GM12878 (cell line): ENCODE measurements at regions of chr14 and their contacts with region 1.

Region 1: DNA sequence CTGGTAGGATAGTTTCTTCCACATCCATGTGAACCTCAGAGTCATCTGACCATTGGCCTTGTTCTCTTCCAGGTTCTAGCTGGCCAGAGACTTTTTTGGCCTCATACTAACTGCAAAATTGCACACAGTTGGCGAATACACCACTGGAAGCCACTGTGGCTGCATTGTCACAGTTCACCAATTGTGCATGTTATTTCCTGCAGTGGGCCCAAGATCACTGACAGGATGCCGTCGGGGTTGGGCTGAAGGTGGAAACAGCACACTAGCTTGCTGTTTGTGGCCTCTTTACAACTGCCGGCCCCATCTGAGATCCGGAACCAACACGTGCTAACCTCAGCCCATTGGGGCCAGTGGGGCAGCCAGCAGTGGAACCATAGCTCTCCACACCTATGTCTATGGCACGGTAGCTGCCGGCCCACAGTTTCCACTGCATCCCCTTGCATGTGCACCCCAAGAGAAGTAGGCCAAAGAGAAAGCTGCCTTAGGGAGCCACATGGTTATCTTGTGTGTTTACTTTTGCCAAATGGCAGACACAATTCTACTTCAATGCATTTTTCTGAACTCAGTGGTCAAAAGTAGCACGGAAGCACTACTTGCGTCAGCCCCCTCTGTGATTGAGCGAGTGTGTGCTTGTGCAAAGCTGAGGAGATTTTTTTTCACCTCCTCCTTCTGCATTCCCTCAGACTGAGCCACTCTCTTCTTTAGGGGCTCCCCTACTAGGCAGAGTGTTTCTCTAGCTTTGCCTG is 464.0 kb downstream of the RAD51B start:
- DNase-seq: peak; percentile 95
- ATAC-seq: peak; percentile 57
- H3K4me3 ChIP-seq: no peak overlapping the region
- H3K27ac ChIP-seq: peak overlapping the region; percentile 92
- H3K4me1 ChIP-seq: peaks cover 89% of the 10 kb centered on the region
- H3K27me3 ChIP-seq: no peaks in the 10 kb centered on the region
- CTCF ChIP-seq: no peak
- EP300 ChIP-seq: peak; percentile 68 to 84
- POLR2A ChIP-seq: peak; percentile 78
- RAD21 ChIP-seq: peak; percentile 20; the same call in 1 of the 2 replicates

Region 2: DNA sequence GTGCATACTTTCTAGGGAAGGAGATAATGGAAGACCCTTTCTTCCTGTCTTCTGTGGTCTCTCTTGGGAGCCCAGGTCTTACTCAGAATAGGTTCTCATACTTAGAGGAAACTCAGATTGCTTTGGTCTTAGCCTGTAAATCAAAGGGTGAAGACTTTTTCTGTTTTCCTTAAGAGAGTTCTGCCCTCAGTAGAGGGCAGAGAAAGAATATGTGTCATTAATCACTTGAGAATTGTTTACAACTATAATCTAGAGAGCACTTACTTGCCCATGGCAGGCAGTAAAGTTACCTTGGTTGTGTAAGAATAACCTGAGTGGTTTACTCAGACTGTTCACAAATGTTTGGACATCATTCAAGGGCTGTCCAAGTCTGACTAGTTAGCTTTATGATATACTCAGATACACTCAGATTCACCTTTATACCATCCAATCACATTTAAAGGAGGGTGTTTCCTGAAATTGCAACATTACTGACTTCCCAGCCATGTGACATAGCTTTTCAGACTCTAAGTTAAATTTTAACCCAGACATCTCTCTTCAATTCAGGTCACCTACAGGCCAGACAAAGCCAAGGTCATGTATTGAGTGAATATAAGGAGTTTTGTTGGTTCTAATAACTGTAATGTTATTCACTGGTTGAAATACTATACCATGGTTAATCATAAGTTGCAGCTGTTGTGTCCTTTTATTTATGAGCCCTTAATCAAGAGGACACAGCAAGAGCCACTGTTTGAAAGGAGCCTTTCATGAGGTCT is 91.8 kb before region 1 on chr14:
- CTCF ChIA-PET with region 1: no interaction called
- POLR2A ChIA-PET with region 1: no interaction called
- RAD21 ChIA-PET with region 1: no interaction called
- SMC1A ChIA-PET with region 1: no interaction called
- in situ Hi-C with region 1: no loop called
- intact Hi-C with region 1: no loop called
- DNase-seq: no peak
- ATAC-seq: peak; percentile 48
- H3K4me3 ChIP-seq: no peak overlapping the region
- H3K27ac ChIP-seq: no peak overlapping the region
- H3K4me1 ChIP-seq: no peaks in the 10 kb centered on the region
- H3K27me3 ChIP-seq: no peaks in the 10 kb centered on the region
- CTCF ChIP-seq: no peak
- EP300 ChIP-seq: no peak
- POLR2A ChIP-seq: no peak
- RAD21 ChIP-seq: no peak

Region 3: GRCh38 chr14:68255697-68256203 is 27.8 kb before region 1 on chr14:
- CTCF ChIA-PET with region 1: interaction called, 28 read pairs
- POLR2A ChIA-PET with region 1: interaction called, 7 read pairs
- RAD21 ChIA-PET with region 1: interaction called, 240 read pairs
- SMC1A ChIA-PET with region 1: interaction called, 121 read pairs
- in situ Hi-C with region 1: no loop called
- intact Hi-C with region 1: loop called (anchors 2 kb)
- DNase-seq: no peak
- ATAC-seq: no peak
- H3K4me3 ChIP-seq: no peak overlapping the region
- H3K27ac ChIP-seq: no peak overlapping the region
- H3K4me1 ChIP-seq: peaks cover 24% of the 10 kb centered on the region
- H3K27me3 ChIP-seq: no peaks in the 10 kb centered on the region
- CTCF ChIP-seq: no peak
- EP300 ChIP-seq: no peak
- POLR2A ChIP-seq: no peak
- RAD21 ChIP-seq: no peak

Region 4: GRCh38 chr14:68297876-68298469 is 14.4 kb after region 1 on chr14:
- CTCF ChIA-PET with region 1: interaction called, 16 read pairs
- POLR2A ChIA-PET with region 1: interaction called, 141 read pairs
- RAD21 ChIA-PET with region 1: interaction called, 343 read pairs
- SMC1A ChIA-PET with region 1: interaction called, 321 read pairs
- in situ Hi-C with region 1: no loop called
- intact Hi-C with region 1: no loop called
- DNase-seq: no peak
- ATAC-seq: no peak
- H3K4me3 ChIP-seq: no peak overlapping the region
- H3K27ac ChIP-seq: peak overlapping the region; percentile 20; the same call in 1 of the 2 replicates
- H3K4me1 ChIP-seq: peaks cover 25% of the 10 kb centered on the region
- H3K27me3 ChIP-seq: no peaks in the 10 kb centered on the region
- CTCF ChIP-seq: no peak
- EP300 ChIP-seq: no peak
- POLR2A ChIP-seq: no peak
- RAD21 ChIP-seq: no peak

Region 5: DNA sequence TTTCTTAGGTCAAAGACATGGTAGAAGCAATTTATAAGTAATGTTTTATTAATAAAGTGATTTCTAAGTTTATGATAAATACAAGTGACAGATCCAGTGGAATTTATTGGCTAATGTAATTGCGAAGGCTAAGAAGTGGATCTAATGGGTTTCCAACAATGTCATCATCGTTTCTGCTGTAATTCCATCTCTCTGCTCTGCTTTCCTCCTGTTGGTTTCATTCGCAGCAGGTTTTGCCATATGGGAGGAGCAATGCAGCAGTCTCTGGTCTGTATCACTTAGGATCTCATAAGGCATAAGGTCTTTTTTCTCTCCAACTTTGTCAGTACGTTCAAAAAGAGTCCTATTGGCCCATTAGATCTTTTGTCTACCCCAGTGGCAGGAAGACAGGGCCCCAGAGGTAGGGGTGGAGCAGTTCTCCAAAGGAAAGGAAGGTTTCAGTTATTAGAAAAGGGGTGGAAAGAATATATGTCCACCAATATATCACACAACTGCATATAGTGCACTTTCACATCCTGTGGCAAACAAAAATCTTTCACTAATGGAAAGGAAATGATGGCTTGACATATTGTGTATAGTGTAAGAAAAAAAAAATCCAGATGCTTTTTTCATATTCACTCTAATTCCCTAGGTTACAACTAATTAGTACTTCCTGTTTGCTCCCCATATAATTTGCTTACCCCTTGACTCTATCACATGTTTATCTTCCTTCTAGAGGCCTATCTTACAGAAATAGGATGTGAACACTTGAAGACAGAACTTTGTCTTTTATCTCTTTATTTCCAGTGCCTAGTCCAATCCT is 58.1 kb after region 1 on chr14:
- CTCF ChIA-PET with region 1: no interaction called
- POLR2A ChIA-PET with region 1: interaction called, 3 read pairs
- RAD21 ChIA-PET with region 1: interaction called, 4 read pairs
- SMC1A ChIA-PET with region 1: interaction called, 5 read pairs
- in situ Hi-C with region 1: no loop called
- intact Hi-C with region 1: loop called (anchors 2 kb)
- DNase-seq: peak; percentile 71
- ATAC-seq: peak; percentile 87
- H3K4me3 ChIP-seq: no peak overlapping the region
- H3K27ac ChIP-seq: peak overlapping the region; percentile 75
- H3K4me1 ChIP-seq: peaks cover 44% of the 10 kb centered on the region
- H3K27me3 ChIP-seq: no peaks in the 10 kb centered on the region
- CTCF ChIP-seq: no peak
- EP300 ChIP-seq: peak; percentile 61 to 76; a peak in 2 of 4 replicates
- POLR2A ChIP-seq: no peak
- RAD21 ChIP-seq: no peak

Region 6: GRCh38 chr14:68377459-68377858 is 93.9 kb after region 1 on chr14:
- CTCF ChIA-PET with region 1: interaction called, 16 read pairs
- POLR2A ChIA-PET with region 1: interaction called, 72 read pairs
- RAD21 ChIA-PET with region 1: interaction called, 58 read pairs
- SMC1A ChIA-PET with region 1: no interaction called
- in situ Hi-C with region 1: no loop called
- intact Hi-C with region 1: loop called (anchors 1 kb)
- DNase-seq: no peak
- ATAC-seq: peak; percentile 28
- H3K4me3 ChIP-seq: no peak overlapping the region
- H3K27ac ChIP-seq: peak overlapping the region; percentile 83
- H3K4me1 ChIP-seq: peaks cover 67% of the 10 kb centered on the region
- H3K27me3 ChIP-seq: no peaks in the 10 kb centered on the region
- CTCF ChIP-seq: no peak
- EP300 ChIP-seq: no peak
- POLR2A ChIP-seq: no peak
- RAD21 ChIP-seq: no peak

Region 7: GRCh38 chr14:68685419-68686204 is 402.1 kb after region 1 on chr14:
- CTCF ChIA-PET with region 1: no interaction called
- POLR2A ChIA-PET with region 1: no interaction called
- RAD21 ChIA-PET with region 1: no interaction called
- SMC1A ChIA-PET with region 1: interaction called, 3 read pairs
- in situ Hi-C with region 1: no loop called
- intact Hi-C with region 1: loop called (anchors 10 kb)
- DNase-seq: peak; percentile 89
- ATAC-seq: peak; percentile 90
- H3K4me3 ChIP-seq: no peak overlapping the region
- H3K27ac ChIP-seq: peak overlapping the region; percentile 67
- H3K4me1 ChIP-seq: peaks cover 48% of the 10 kb centered on the region
- H3K27me3 ChIP-seq: no peaks in the 10 kb centered on the region
- CTCF ChIP-seq: no peak
- EP300 ChIP-seq: peak in 1 of 2 experiments; percentile 85; a peak in 3 of 4 replicates
- POLR2A ChIP-seq: peak; percentile 62
- RAD21 ChIP-seq: 0 out of 2 replicates have a peak, but pooled peaks have one; percentile 0

Region 8: DNA sequence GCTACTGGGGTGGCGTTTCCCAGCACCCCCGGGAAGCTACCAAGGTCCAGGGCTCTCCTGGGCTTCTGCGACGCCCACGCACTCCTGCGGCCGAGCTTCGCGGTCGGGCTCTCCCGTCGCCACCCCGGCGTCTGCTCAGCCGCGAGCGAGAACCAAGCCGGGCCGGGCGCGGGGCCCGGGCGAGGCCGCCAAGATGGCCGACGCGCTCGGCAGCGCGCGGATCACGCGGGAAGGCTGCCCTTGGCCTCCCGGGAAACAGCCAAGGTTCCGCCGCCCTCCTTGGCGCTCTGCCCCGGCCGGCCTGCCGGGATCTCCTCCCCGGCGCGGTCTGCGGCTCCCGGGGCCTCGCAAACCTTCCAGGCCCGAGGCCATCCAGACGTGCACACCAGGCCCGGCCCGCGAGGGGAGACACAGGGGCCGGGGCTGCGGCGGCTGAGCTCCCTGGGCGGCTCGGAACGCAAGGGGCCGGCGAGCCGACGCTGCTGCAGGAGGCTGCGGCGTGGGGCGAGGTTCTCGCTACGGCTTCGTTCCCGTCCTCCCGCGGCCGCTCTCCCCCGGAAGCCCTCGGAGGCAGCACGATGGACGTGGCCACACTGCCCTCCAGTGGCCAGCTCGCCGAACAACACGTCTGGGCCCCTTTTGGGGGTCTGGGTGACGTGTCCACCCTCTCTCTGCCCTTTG is 532.9 kb after region 1 on chr14:
- CTCF ChIA-PET with region 1: interaction called, 9 read pairs
- POLR2A ChIA-PET with region 1: interaction called, 4 read pairs
- RAD21 ChIA-PET with region 1: interaction called, 16 read pairs
- SMC1A ChIA-PET with region 1: interaction called, 18 read pairs
- in situ Hi-C with region 1: no loop called
- intact Hi-C with region 1: loop called (anchors 10 kb)
- DNase-seq: no peak
- ATAC-seq: peak; percentile 64
- H3K4me3 ChIP-seq: peak overlapping the region; percentile 58
- H3K27ac ChIP-seq: peak overlapping the region; percentile 95
- H3K4me1 ChIP-seq: peaks cover 58% of the 10 kb centered on the region
- H3K27me3 ChIP-seq: no peaks in the 10 kb centered on the region
- CTCF ChIP-seq: peak; percentile 89 to 99 (median 92); a peak in 5 of 6 replicates
- EP300 ChIP-seq: 0 out of 4 replicates have a peak, but pooled peaks of 1 of the 2 experiments have one; percentile 12
- POLR2A ChIP-seq: peak; percentile 80
- RAD21 ChIP-seq: peak; percentile 92